ENCODE measurements at regions of chr14 and their contacts with region 1.

Region 1: DNA sequence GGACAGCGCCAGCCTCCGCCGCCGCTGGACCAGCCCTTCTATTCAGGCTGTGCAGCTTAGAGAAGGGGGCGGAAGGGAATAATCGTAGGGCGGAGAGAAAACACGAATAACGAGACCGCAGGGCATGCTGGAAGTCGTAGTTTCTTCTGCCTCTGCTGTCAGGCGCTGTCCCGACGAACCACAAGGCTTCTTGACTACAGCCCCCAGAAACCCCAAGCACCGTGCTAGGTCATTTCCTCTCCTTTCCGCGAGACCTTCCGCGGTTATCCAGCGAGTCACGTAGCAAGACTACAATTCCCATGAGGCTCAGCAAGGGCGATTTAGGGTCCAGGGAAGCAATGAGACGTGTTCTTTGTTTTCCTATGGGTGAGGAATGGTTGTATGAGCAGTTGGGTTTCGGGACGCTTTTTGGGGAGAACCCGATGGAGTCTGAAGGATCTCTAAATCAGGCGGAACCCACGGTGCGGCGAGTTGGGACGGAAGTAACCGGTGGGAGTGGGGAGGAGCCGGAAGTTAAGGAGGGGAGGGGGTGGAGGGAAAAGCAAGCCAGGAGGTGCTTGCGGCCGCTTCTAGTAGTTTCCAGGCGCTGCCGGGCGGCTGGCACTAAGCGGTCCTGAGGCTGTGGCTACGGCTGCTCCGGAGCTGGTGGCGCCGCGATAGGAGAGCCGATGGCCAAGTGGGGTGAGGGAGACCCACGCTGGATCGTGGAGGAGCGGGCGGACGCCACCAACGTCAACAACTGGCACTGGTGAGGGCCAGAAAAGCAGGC is at the starts of genes AHSA1 and VIPAS39:
- DNase-seq: peak; percentile 97
- H3K4me3 Mint-ChIP-seq: peak within 1 kb of the TSS; percentile 100
- H3K27ac Mint-ChIP-seq: peak within 1 kb of the TSS; percentile 98
- H3K4me1 Mint-ChIP-seq: peaks cover 35% of the 10 kb centered on the region
- H3K27me3 Mint-ChIP-seq: no peaks in the 10 kb centered on the region
- total RNA-seq, gene AHSA1: 253 to 269 TPM
- total RNA-seq, gene VIPAS39: 14.9 to 16.8 TPM

Region 2: DNA sequence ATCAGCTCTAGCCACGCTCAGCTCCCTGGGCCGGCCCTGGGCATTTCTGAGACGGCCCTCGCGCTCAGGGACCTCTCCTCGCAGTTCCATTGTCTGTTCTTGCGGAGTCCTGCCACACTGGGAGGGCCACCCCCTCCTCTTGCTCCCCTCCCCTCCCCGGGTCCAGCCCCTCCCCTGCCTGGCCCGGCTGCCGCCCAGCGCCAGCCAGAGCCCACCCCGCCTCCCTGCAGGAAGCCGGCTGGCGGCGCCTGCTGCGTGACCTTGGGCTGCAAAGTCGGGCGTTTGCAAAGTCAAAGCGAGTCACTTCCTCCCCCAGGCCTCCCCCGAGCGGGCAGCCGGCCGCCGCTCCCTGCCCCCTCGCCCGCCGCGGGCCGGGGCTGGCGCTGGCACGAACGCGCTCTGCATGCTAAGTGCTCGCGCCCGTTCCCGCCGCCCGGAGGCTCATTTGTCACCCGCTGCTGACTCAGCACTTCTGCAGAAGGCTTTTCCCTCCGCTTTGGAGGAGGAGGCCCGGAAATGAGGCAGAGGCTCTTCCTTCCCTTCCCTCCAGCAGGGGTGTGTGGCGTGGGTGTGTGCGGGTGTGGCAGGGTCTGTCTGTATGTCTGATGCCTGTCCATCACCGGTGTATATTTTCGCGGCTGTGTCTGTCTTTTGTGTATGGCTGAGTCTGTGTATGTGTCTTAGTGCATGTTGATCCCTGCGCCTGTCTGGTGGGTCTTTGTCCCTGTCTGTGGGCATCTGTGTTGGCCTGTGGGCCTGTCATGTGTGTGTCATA is 501.2 kb before region 1 on chr14:
- CTCF ChIA-PET with region 1: no interaction called
- POLR2A ChIA-PET with region 1: no interaction called
- intact Hi-C with region 1: loop called (anchors 1 kb)
- DNase-seq: peak; percentile 97
- H3K4me3 Mint-ChIP-seq: peak overlapping the region; percentile 79
- H3K27ac Mint-ChIP-seq: peak overlapping the region; percentile 99
- H3K4me1 Mint-ChIP-seq: peaks cover 77% of the 10 kb centered on the region
- H3K27me3 Mint-ChIP-seq: no peaks in the 10 kb centered on the region

Region 3: DNA sequence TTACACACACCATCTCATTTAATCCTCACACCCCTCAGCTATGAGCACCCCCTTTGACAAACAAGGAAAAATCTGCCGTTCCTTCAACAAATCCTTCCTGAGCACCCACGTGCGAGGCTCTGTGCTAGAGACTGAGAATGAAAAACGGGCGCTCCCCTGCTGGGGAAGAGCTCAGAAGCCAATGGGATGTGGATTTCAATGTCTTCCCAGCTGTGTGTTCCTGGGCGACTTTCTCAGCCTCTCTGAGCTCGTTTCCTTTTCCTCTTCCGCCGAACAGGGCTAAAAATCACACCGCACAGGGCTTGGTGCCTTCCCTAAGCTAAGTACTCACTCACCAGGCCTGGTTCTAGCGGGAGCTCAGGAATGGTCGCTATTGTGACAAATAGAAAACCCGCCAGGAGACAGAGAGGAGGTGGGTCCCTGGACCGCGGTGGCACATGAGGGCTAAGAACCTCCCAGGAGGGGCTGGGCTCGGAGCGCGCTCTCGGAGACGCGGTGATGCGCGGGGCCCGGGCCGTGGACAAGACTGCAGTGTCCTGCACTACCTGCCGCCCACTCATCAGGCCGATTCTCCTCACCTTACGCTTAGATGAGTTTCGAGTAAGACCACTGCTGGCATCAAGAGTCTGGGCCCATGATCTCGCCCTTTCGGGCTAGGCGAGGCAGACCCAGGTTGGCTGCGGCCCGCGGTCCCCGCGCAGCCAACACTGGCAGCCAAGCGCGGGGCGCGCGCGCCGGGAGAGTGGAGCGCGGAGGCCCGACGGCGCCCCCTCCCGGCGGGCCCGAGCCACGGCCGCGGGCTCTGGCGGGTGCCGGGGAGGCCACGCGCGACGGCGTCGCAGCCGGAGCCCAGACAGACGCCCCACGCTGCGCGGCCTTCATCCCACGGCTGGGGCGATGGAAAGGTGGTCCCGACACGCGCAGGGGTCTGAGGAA is 333.1 kb before region 1 on chr14:
- CTCF ChIA-PET with region 1: no interaction called
- POLR2A ChIA-PET with region 1: no interaction called
- intact Hi-C with region 1: loop called (anchors 1 kb)
- DNase-seq: peak; percentile 77
- H3K4me3 Mint-ChIP-seq: peak overlapping the region; percentile 82
- H3K27ac Mint-ChIP-seq: peak overlapping the region; percentile 73
- H3K4me1 Mint-ChIP-seq: peaks cover 50% of the 10 kb centered on the region
- H3K27me3 Mint-ChIP-seq: peaks cover 2% of the 10 kb centered on the region

Region 4: DNA sequence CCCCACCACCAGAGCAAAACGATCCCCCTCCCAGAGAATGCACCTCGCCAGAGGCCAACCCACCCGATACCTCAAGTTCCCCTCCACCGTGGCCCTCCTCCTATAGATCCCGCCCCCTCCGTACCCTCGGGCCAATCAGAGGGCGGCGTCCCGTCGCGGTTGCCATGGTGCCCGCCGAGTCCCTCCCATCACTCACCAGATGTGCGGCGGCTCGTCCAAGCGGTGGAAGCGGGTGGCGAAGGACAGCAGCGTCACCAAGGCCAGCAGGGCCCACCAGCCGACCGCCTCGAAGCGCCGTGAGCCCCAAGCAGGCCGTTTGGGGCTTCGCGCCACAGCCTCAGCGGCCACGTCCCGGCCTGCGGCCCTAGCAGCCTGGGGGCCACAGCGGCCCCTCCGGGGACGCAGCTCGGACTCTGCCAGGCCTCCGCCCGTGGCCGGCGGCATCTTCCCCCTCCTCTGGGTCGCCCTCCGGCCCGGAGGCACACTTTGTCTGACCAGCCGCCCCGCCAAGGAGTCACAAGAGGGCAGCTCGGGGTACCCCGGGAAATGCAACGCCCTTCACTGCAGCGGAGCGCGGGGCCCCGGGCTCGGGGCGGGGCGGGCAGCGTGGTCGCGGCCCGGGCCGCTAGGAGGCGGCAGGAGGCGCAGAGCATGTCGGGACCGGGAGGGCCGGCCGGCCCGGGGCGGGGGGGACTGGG is 137.3 kb before region 1 on chr14 and contains the start of gene POMT2:
- CTCF ChIA-PET with region 1: interaction called, 8 read pairs
- POLR2A ChIA-PET with region 1: interaction called, 3 read pairs
- intact Hi-C with region 1: loop called (anchors 1 kb)
- DNase-seq: peak; percentile 95
- H3K4me3 Mint-ChIP-seq: peak within 1 kb of the TSS; percentile 93
- H3K27ac Mint-ChIP-seq: peak within 1 kb of the TSS; percentile 99
- H3K4me1 Mint-ChIP-seq: peaks cover 17% of the 10 kb centered on the region
- H3K27me3 Mint-ChIP-seq: no peaks in the 10 kb centered on the region
- total RNA-seq, gene POMT2: 12.9 to 13.1 TPM

Region 5: GRCh38 chr14:77442196-77442595 is 15.5 kb before region 1 on chr14:
- CTCF ChIA-PET with region 1: no interaction called
- POLR2A ChIA-PET with region 1: no interaction called
- intact Hi-C with region 1: no loop called
- DNase-seq: no peak
- H3K4me3 Mint-ChIP-seq: no peak overlapping the region
- H3K27ac Mint-ChIP-seq: no peak overlapping the region
- H3K4me1 Mint-ChIP-seq: no peaks in the 10 kb centered on the region
- H3K27me3 Mint-ChIP-seq: no peaks in the 10 kb centered on the region

Region 6: GRCh38 chr14:77616454-77617229 is 158.9 kb after region 1 on chr14 and contains the start of gene SPTLC2:
- CTCF ChIA-PET with region 1: interaction called, 3 read pairs
- POLR2A ChIA-PET with region 1: no interaction called
- intact Hi-C with region 1: loop called (anchors 1 kb)
- DNase-seq: peak; percentile 98
- H3K4me3 Mint-ChIP-seq: peak within 1 kb of the TSS; percentile 89
- H3K27ac Mint-ChIP-seq: peak within 1 kb of the TSS; percentile 86
- H3K4me1 Mint-ChIP-seq: peaks cover 31% of the 10 kb centered on the region
- H3K27me3 Mint-ChIP-seq: no peaks in the 10 kb centered on the region
- total RNA-seq, gene SPTLC2: 23.6 to 23.9 TPM

Region 7: GRCh38 chr14:77760381-77761246 is 302.9 kb after region 1 on chr14 and contains the start of gene SNW1:
- CTCF ChIA-PET with region 1: interaction called, 4 read pairs
- POLR2A ChIA-PET with region 1: no interaction called
- intact Hi-C with region 1: loop called (anchors 1 kb)
- DNase-seq: peak; percentile 95
- H3K4me3 Mint-ChIP-seq: peak within 1 kb of the TSS; percentile 95
- H3K27ac Mint-ChIP-seq: peak within 1 kb of the TSS; percentile 96
- H3K4me1 Mint-ChIP-seq: peaks cover 32% of the 10 kb centered on the region
- H3K27me3 Mint-ChIP-seq: no peaks in the 10 kb centered on the region
- total RNA-seq, gene SNW1: 115 to 120 TPM

Measured in activated CD4-positive, alpha-beta memory T cell treated with anti-CD3 and anti-CD28 coated beads for 36 hours (primary cell).